ENCODE measurements at regions of chr6 and their contacts with region 1.

Region 1: DNA sequence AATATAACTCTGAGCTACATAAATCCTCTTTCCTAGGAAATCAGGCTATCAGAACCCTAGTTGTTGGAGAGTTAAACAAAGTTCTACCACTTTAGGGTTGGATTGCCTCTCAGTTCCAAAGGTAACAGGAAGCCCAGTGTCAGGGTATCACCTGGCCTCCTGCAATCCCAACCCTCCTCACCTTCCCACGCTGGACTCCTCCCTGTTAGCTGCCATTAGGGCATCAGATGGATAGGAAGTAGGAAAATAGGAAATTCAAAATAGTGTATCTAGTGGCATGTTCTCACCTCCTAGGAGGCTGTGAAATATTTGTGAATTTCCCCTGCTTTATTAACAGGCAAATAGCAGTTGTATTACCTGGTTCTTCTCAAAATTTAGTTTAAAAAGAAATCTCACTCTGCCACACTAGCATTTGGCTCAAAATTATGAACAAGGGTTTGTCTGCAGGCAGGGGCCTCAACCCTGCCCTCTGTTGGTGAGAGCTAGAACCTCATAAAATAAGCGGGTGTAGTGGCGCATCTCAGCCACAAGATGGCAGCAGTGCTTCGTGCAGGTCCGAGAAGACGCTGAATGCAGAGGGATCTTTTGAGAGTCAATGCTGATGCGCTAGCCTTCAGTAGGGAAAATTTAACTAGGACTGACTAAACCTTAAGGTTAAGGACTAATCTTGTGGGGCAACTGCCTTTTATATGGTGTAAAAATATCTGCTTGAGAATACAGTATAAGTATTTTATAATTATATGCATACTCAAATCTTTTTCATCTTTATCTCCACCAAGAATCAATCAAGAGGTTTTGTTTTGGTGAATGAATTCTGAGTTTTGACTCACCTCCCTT is 209.8 kb upstream of the KCNQ5 start:
- DNase-seq: peak; percentile 63
- ATAC-seq: peak; percentile 73 to 84

Region 2: DNA sequence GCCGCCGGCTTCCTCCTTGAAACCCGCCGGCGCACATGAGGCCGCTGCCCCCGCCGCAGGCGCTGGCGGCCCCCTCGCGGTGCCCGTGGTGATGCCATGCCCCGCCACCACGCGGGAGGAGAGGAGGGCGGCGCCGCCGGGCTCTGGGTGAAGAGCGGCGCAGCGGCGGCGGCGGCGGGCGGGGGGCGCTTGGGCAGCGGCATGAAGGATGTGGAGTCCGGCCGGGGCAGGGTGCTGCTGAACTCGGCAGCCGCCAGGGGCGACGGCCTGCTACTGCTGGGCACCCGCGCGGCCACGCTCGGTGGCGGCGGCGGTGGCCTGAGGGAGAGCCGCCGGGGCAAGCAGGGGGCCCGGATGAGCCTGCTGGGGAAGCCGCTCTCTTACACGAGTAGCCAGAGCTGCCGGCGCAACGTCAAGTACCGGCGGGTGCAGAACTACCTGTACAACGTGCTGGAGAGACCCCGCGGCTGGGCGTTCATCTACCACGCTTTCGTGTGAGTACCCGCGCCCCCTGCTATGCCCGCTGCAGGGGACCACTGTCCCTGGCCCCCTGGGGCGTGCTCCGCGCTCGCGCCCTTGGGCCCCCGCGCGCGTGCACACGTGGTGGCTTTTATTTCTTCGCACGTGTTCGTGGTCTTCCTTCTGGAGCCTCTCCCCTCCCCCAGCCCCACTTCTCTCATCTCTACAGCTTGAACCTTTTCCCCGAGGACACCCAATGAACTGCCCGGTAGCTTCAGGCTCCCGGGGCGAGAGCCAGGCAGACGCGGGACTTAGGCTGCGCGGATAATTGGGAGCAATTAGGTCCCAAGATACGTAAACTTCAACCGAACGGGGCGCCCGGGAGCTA is 210.2 kb after region 1 on chr6:
- intact Hi-C with region 1: loop called in 1 of 2 experiments (anchors 10 kb)
- DNase-seq: peak; percentile 35
- ATAC-seq: peak; percentile 63 to 66

Region 3: GRCh38 chr6:73129653-73130443 is 717.8 kb after region 1 on chr6:
- intact Hi-C with region 1: loop called in 1 of 2 experiments (anchors 2 kb)
- DNase-seq: peak; percentile 86
- ATAC-seq: peak; percentile 90 to 92

Region 4: GRCh38 chr6:73180763-73181619 is 768.9 kb after region 1 on chr6:
- intact Hi-C with region 1: loop called (anchors 2 to 10 kb)
- DNase-seq: no peak
- ATAC-seq: peak; percentile 84 to 94

Region 5: GRCh38 chr6:73329201-73329600 is 917.1 kb after region 1 on chr6:
- intact Hi-C with region 1: loop called in 1 of 2 experiments (anchors 10 kb)
- DNase-seq: no peak
- ATAC-seq: no peak

Measured in left cardiac atrium (tissue), 4 donors.